CD4-positive, alpha-beta memory T cell (primary cell): ENCODE measurements at regions of chr13 and their contacts with region 1.

Region 1: DNA sequence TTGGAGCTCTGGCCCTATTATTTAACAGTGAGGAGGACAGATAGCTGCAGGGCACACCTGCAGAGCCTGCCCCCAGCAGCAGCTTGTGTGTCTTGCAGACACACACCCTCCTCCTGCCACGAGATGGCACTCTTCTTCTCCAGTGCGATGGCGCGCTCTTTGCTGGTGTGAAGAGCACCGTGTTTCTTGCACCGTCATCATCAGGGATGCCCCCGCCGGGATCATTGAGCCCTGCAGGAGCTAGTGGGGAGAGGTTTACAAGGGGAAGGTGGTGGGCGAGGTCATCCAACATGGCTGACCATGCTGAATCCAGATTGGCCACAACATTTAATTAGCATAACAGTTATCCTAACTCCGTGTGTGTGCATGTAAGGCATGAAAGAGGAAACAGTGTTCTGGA is 105.6 kb downstream of the RAB20 start:
- DNase-seq: peak in 4 of 5 donors; percentile 31 to 48 (median 44)
- H3K4me3 ChIP-seq: no peak overlapping the region
- H3K4me3 Mint-ChIP-seq: peak overlapping the region in 6 of 8 donors; percentile 22 to 78 (median 66)
- H3K27ac ChIP-seq: no peak overlapping the region
- H3K27ac Mint-ChIP-seq: no peak overlapping the region
- H3K4me1 ChIP-seq: peaks cover 5% of the 10 kb centered on the region
- H3K4me1 Mint-ChIP-seq: peaks cover 4 to 5% (median 5%) of the 10 kb centered on the region in 4 donors
- H3K27me3 ChIP-seq: no peaks in the 10 kb centered on the region
- H3K27me3 Mint-ChIP-seq: peaks cover 15 to 17% of the 10 kb centered on the region in 2 donors

Region 2: GRCh38 chr13:110615322-110616102 is 159.6 kb after region 1 on chr13 and contains the start of gene NAXD:
- CTCF ChIA-PET with region 1: interaction called, 5 read pairs
- POLR2A ChIA-PET with region 1: no interaction called
- intact Hi-C with region 1: loop called (anchors 10 kb)
- DNase-seq: peak; percentile 71 to 75 (median 73)
- H3K4me3 ChIP-seq: peak within 1 kb of the TSS; percentile 53 to 67
- H3K4me3 Mint-ChIP-seq: peak within 1 kb of the TSS; percentile 88 to 96 (median 94)
- H3K27ac ChIP-seq: peak within 1 kb of the TSS; percentile 47
- H3K27ac Mint-ChIP-seq: peak within 1 kb of the TSS; percentile 71 to 98 (median 93)
- H3K4me1 ChIP-seq: peaks cover 17% of the 10 kb centered on the region
- H3K4me1 Mint-ChIP-seq: peaks cover 28 to 47% (median 40%) of the 10 kb centered on the region in 4 donors
- H3K27me3 ChIP-seq: no peaks in the 10 kb centered on the region
- H3K27me3 Mint-ChIP-seq: no peaks in the 10 kb centered on the region
- total RNA-seq, gene NAXD: 32.6 to 33.4 TPM

Region 3: DNA sequence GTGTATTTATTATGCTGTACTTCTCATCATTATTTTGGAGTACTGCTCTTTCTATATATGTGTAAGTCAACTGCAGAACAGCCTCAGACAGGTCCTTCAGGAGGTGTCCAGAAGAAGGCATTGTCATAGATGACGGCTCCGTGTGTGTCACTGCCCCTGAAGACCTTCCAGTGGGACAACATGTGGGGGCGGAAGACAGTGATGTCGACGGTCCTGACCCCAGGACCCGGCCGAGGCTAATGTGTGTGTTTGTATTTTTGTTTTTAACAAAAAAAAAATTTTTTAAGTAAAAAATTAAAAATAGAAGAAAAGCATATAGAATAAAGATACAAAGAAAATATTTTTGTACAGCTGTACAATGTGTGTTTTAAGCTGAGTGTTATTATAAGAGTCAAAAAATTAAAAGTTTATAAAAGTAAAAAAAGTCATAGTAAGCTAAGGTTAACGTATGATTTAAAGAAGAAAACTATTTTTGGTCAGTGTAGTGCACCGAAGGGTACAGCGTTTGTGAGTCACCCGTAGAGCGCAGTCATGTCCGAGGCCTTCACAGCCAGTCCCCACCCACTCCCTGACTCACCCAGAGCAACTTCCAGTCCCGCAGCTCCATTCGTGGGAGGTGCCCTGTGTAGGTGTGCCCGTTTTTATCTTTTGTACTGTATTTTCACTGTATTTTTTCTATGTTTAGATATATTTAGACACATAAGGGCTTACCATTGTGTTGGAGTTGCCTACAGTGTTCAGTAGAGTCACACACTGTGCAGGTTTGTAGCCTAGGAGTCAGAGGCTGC is 1878.0 kb after region 1 on chr13:
- CTCF ChIA-PET with region 1: no interaction called
- POLR2A ChIA-PET with region 1: no interaction called
- intact Hi-C with region 1: no loop called
- DNase-seq: no peak
- H3K4me3 ChIP-seq: no peak overlapping the region
- H3K4me3 Mint-ChIP-seq: no peak overlapping the region
- H3K27ac ChIP-seq: no peak overlapping the region
- H3K27ac Mint-ChIP-seq: no peak overlapping the region
- H3K4me1 ChIP-seq: no peaks in the 10 kb centered on the region
- H3K4me1 Mint-ChIP-seq: peaks cover 0 to 4% (median 0%) of the 10 kb centered on the region in 4 donors
- H3K27me3 ChIP-seq: no peaks in the 10 kb centered on the region
- H3K27me3 Mint-ChIP-seq: peaks cover 15 to 19% of the 10 kb centered on the region in 2 donors